Ascending aorta (tissue), 2 donors: ENCODE measurements at regions of chr17 and their contacts with region 1.

Region 1: DNA sequence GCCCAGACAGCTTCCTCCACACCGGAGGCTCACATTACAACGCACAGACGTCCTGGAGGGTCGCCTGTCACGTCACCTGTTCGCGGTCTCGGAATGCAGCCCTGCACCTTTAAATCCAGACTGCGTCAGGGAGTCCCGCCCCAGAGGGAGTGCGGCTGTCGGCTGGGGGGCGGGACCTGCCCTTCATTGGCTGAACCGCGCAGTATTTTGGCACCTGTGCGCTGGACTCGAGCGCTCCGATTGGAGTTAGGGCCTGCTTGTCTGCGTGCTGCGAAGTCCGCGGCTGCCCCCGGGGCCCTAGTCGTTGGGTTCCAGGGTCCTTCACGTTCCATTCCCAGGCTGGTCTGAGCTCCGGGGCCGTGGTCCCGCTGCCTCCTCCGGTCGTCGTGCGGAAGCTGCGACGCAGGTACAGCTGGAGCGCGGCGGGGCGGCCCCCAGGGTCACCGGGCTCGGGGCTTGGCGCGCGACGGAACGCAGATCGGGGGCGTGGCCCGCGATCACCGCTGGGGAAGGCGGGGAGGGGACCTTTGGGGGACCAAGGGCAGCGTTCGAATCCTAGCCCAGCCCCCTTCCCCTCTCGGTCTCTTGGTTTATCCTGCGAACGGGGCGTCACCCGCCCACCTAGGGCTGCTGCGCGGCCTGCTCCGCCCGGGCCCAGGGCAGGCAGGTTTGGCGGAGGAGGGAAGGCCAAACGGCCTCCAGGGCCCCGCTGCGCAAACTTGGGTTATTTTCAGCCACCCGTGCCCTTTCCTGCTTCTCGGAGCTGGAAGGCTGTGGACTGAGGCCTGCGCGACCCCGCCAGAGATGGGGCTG is at the start of gene MIEF2:
- DNase-seq: peak; percentile 84 to 97
- H3K4me3 ChIP-seq: peak within 1 kb of the TSS; percentile 69 to 76
- H3K27ac ChIP-seq: peak within 1 kb of the TSS; percentile 93 to 96
- H3K4me1 ChIP-seq: peaks cover 22 to 44% of the 10 kb centered on the region in 2 donors
- H3K27me3 ChIP-seq: no peaks in the 10 kb centered on the region
- CTCF ChIP-seq: no peak
- total RNA-seq, gene MIEF2: 18.5 TPM

Region 2: DNA sequence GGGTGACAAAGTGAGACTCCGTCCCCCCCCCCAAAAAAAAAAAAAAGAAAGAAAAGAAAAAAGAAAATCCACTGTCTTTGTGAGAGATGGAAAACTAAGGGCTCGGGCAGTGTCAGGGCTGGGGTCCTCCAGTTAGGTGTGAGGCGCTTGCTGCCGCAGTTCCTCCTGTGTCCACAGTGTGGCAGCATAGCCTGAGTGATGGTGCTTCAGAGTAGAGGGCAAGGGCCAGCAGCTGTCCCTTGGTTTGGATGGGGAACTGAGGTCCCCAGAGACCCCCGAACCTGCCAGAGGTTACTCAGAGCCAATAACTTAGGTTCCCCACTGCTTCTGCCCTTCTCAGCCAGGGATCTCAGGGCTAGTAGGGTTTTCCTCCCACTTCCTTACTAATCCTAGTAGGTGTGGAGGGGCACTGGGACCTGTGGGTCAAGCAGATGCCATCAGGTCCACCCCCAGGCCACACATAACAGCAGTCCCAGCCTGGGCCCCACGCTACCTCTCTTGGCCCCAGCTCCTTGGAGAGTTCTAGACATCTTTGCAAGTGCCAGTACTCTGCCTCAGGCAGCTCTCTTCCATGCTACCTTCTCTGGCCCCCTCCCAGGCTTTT is 43.0 kb before region 1 on chr17:
- intact Hi-C with region 1: loop called (anchors 5 kb)
- DNase-seq: peak; percentile 29 to 84
- H3K4me3 ChIP-seq: no peak overlapping the region
- H3K27ac ChIP-seq: no peak overlapping the region
- H3K4me1 ChIP-seq: peaks cover 3 to 5% of the 10 kb centered on the region in 2 donors
- H3K27me3 ChIP-seq: no peaks in the 10 kb centered on the region
- CTCF ChIP-seq: peak; percentile 87 to 98 (median 95)

Region 3: GRCh38 chr17:18225121-18225566 is 35.4 kb before region 1 on chr17:
- intact Hi-C with region 1: loop called (anchors 1 kb)
- DNase-seq: peak; percentile 85 to 98
- H3K4me3 ChIP-seq: peak overlapping the region; percentile 44 to 61
- H3K27ac ChIP-seq: peak overlapping the region; percentile 31 to 49
- H3K4me1 ChIP-seq: peaks cover 4 to 14% of the 10 kb centered on the region in 2 donors
- H3K27me3 ChIP-seq: no peaks in the 10 kb centered on the region
- CTCF ChIP-seq: no peak

Region 4: GRCh38 chr17:18363101-18364049 is 102.8 kb after region 1 on chr17 and contains the start of gene SHMT1:
- intact Hi-C with region 1: loop called (anchors 2 kb)
- DNase-seq: peak; percentile 83 to 96
- H3K4me3 ChIP-seq: peak within 1 kb of the TSS; percentile 86 to 89
- H3K27ac ChIP-seq: peak within 1 kb of the TSS; percentile 66 to 72
- H3K4me1 ChIP-seq: peaks cover 0 to 6% of the 10 kb centered on the region in 2 donors
- H3K27me3 ChIP-seq: no peaks in the 10 kb centered on the region
- CTCF ChIP-seq: no peak
- total RNA-seq, gene SHMT1: 16.7 TPM